ENCODE measurements at regions of chr13 and their contacts with region 1.

Region 1: GRCh38 chr13:32650705-32651311 is 64.6 kb downstream of the PDS5B start:
- DNase-seq: peak; percentile 46
- CTCF ChIP-seq: peak; percentile 83

Region 2: DNA sequence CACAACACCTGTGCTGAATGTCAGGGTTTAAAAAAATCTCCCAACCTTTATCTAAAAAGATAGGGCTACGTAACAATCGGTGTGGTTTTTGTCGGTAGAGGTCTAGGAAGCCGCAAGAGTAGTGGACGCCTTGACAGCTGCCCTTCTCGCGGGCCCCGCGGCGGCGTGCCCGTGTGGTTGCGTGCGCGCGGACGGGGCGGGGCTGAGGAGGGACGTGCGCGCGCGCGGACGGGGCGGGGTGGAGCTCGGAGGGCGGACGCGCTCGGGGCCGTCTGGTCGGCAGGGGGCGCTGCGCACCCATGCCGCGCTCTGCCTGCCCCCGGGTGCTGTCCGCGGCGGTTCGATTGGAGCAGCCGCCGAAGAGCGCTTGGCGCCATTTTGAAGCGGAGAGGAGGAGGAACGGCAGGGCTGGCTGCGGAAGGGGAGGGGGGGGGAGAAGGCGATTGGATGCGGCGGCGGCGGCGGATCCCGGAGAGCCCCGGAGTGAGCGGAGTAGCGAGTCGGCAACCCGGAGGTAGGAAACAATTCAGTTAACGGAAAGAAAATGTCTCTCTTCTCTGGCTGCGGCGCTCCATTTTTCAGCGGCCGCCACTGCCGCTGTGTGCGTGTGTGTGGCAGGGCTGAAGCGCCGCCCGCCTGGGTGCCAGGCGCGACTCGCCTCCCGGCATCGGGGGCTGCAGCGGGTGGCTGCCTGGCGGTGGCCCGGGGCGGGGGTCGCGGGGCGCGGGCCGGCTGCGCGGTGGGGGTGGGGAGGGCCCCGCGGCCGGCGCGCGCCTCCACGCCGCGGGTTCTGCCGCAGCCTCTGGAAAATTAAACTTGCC is 64.5 kb before region 1 on chr13 and contains the start of gene PDS5B:
- CTCF ChIA-PET with region 1: interaction called, 24 read pairs
- POLR2A ChIA-PET with region 1: no interaction called
- DNase-seq: peak; percentile 93
- CTCF ChIP-seq: peak; percentile 90

Region 3: GRCh38 chr13:32609428-32609827 is 41.4 kb before region 1 on chr13:
- CTCF ChIA-PET with region 1: interaction called, 12 read pairs
- POLR2A ChIA-PET with region 1: no interaction called
- DNase-seq: no peak
- CTCF ChIP-seq: no peak

Region 4: GRCh38 chr13:32627793-32628192 is 23.0 kb before region 1 on chr13:
- CTCF ChIA-PET with region 1: interaction called, 13 read pairs
- POLR2A ChIA-PET with region 1: no interaction called
- DNase-seq: no peak
- CTCF ChIP-seq: no peak

Region 5: GRCh38 chr13:32639502-32640105 is 11.2 kb before region 1 on chr13:
- CTCF ChIA-PET with region 1: interaction called, 66 read pairs
- POLR2A ChIA-PET with region 1: no interaction called
- DNase-seq: peak; percentile 52
- CTCF ChIP-seq: peak; percentile 74

Region 6: GRCh38 chr13:32669030-32669646 is 18.3 kb after region 1 on chr13:
- CTCF ChIA-PET with region 1: interaction called, 82 read pairs
- POLR2A ChIA-PET with region 1: interaction called, 5 read pairs
- DNase-seq: peak; percentile 11
- CTCF ChIP-seq: peak; percentile 48

Measured in GM10248 (cell line).